Activated CD4-positive, alpha-beta T cell treated with anti-CD3 and anti-CD28 coated beads, Interleukin-2, amount 10 ng/mL, durations not matched to agents 24 days and 14 days (primary cell): ENCODE measurements at regions of chr4 and their contacts with region 1.

Region 1: GRCh38 chr4:70901984-70902576 is at the start of gene MOB1B:
- DNase-seq: peak; percentile 95
- H3K4me3 Mint-ChIP-seq: peak within 1 kb of the TSS; percentile 98
- H3K27ac Mint-ChIP-seq: peak within 1 kb of the TSS; percentile 92
- H3K4me1 Mint-ChIP-seq: peaks cover 18% of the 10 kb centered on the region
- H3K27me3 Mint-ChIP-seq: no peaks in the 10 kb centered on the region
- total RNA-seq, gene MOB1B: 23.1 and 24.1 TPM in 2 replicates

Region 2: DNA sequence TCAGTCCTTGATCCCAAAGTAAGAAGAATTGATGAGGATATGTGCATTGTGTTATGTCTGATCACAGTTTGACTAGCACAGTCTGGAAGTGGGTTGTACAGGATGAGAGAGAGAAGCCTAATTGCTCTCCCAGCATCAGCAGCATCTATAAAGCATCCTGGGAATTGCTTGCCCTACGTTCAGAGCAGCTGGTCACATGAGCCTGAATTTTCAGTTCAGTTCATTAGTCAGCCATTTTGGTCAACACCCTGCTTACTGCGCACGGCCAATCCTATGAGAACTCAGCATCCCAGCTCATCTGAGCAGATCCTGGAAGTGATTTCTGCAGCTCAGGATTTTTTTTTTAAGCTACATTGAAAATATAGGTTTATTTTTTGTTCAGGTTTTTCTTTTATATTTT is 180.3 kb before region 1 on chr4 and contains the start of gene RUFY3:
- intact Hi-C with region 1: no loop called
- DNase-seq: no peak
- H3K4me3 Mint-ChIP-seq: peak within 1 kb of the TSS; percentile 35
- H3K27ac Mint-ChIP-seq: peak within 1 kb of the TSS; percentile 67
- H3K4me1 Mint-ChIP-seq: peaks cover 14% of the 10 kb centered on the region
- H3K27me3 Mint-ChIP-seq: no peaks in the 10 kb centered on the region
- total RNA-seq, gene RUFY3: 11.5 and 14.8 TPM in 2 replicates

Region 3: GRCh38 chr4:70808151-70808550 is 93.9 kb before region 1 on chr4:
- intact Hi-C with region 1: no loop called
- DNase-seq: no peak
- H3K4me3 Mint-ChIP-seq: no peak overlapping the region
- H3K27ac Mint-ChIP-seq: no peak overlapping the region
- H3K4me1 Mint-ChIP-seq: no peaks in the 10 kb centered on the region
- H3K27me3 Mint-ChIP-seq: no peaks in the 10 kb centered on the region

Region 4: DNA sequence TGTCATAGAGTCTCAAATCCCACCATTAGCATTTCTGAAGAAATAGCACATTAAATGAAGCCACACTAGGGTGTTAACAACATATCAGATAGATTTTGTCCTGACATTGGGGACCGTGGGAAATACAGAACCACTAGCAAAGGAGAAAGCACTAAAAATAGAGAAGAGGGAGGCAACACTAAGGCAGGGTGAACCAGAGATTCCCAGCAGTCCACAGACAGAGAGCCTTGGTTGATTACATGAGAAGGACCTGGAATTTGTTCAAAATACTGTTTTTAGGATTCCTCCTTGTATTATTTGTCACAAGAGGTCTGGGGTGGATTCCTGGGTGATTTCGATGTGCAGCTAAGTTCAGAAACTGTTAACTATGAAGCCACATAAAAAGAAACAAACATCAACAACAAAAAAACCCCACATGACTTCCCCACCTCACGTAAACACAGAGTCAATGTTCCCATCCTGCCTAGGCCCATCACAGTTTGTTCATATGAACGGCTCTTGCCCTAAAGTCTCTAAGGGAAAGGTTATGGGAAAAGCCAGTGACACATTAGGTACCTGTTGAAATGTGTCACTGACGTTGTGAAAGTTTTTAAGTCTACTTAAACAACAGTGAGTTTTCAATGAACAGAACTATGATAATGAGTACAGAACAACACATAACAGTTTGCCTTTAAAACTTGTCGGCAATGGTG is 38.8 kb before region 1 on chr4:
- intact Hi-C with region 1: loop called (anchors 1 kb)
- DNase-seq: peak; percentile 72
- H3K4me3 Mint-ChIP-seq: peak overlapping the region; percentile 57
- H3K27ac Mint-ChIP-seq: peak overlapping the region; percentile 72
- H3K4me1 Mint-ChIP-seq: peaks cover 13% of the 10 kb centered on the region
- H3K27me3 Mint-ChIP-seq: no peaks in the 10 kb centered on the region